ENCODE measurements at regions of chr18 and their contacts with region 1.

Region 1: DNA sequence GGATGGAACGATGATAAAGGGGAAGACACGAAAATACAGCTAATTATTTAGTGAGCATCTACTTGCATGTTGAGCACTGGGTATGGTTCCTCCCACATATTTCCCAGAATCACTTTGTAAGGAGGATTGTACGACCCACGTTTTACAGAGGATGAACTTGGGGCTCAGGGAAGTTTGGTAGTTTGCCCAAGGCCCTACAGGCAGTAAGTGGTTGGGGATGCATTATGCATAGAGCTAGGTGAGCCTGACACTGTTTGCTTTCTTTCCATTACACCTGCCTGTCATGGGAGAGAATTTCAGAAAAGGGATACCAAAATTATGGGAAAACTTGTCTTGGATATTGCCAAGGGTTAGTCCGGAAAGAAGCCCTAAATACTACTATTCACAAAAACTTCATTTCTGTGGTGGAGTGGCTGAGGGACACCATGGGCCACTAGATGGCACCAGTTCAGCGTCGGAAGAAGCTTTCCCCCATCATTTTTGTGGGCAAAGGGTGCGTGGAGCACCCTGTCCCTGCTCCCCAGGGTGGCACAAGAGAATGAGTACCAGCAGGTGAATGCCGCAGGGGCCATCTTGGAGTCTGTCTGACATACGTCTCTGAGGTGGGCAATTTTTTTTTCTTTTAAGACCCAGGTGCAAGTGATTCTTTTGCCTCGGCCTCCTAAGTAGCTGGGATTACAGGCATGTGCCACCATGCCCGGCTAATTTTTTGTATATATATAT is 23.5 kb upstream of the C18orf32 start:
- DNase-seq: peak in 2 of 4 donors; percentile 37 to 62
- ATAC-seq: peak; percentile 88
- H3K4me3 ChIP-seq: no peak overlapping the region
- H3K27ac ChIP-seq: no peak overlapping the region
- H3K4me1 ChIP-seq: no peaks in the 10 kb centered on the region
- H3K27me3 ChIP-seq: no peaks in the 10 kb centered on the region
- CTCF ChIP-seq: peak; percentile 67 to 91

Region 2: DNA sequence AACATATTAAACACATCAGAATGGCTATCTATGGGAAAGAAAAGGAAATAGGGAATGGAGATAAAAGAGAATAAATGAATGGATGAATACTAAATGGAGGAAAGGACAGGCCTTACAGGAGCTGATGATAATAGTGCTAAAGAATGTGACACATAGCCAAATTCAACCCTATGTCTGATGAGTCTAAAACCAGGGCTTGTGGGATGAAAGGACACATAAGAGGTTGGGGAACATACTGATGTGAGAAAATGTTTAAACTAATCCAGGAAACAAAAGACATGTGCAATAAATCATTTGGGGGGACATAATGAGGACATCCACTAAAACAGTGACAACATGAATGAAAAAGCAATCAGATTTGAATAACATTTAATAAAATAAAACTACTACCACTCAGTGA is 170.1 kb before region 1 on chr18:
- intact Hi-C with region 1: no loop called
- DNase-seq: no peak
- ATAC-seq: no peak
- H3K4me3 ChIP-seq: no peak overlapping the region
- H3K27ac ChIP-seq: no peak overlapping the region
- H3K4me1 ChIP-seq: no peaks in the 10 kb centered on the region
- H3K27me3 ChIP-seq: no peaks in the 10 kb centered on the region
- CTCF ChIP-seq: no peak

Region 3: DNA sequence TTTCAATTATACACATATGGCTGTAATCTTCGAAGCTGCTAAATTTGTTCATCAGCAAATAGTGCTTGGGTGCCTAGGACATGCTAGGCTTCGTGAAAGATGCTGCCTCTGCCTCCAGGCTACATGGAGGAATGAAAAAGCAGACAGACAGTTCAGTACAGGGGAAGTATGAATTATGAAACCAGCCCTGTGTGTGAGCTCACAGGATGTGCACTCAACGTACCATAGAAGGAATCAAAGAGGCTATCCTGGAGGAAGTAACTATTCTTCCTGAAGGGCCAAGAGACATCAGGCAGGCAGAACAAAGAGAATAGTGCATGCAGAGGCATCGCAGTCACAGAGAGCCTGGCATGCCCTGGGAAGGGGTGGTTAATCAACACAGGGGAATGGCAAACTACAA is 111.6 kb before region 1 on chr18:
- intact Hi-C with region 1: no loop called
- DNase-seq: no peak
- ATAC-seq: peak; percentile 65
- H3K4me3 ChIP-seq: no peak overlapping the region
- H3K27ac ChIP-seq: peak overlapping the region in 1 of 2 donors; percentile 76
- H3K4me1 ChIP-seq: peaks cover 5 to 41% of the 10 kb centered on the region in 2 donors
- H3K27me3 ChIP-seq: no peaks in the 10 kb centered on the region
- CTCF ChIP-seq: no peak

Region 4: DNA sequence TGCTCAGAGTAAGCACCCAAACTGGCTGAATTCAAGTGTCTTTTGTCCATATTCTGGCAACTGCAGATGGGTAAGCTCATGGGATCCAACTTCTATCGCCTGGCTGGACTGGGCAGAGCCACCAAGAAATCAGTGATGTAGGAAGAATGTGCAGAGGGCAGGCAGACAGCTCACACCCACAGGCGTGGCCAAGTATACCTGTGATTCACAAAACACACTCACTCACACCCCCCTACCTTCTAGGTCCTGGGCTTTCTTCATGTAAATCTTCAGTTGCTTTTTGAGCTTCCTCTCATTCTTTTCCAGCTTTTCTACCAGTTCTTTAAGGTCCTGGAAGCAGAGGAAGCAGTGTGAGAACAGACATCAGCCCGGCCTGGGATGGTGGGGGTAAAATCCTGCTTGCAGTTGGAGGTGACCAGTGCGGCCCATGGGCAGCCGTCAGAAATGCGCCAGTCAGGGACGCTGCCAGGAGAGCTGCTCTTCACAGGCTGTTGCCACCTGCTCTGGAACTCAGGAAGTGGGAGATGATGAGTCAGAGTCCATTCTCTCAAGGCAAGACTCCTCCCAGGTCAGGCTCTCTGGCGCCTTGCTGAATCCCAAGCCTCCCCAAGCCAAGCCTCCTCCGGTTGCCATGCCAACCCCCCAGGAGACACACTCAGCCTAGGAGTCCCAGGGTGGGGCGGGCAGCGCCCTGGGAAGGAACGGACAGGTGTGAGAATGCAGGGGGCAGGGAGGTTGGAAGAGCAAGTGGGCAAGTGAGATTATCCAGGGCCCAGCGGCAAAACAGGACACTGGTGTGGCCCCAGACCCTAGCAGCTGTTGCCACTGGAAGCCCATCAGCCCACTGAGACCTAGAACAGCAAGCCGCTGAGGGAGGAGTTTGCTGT is 339.0 kb after region 1 on chr18:
- intact Hi-C with region 1: loop called in 1 of 2 experiments (anchors 5 kb)
- DNase-seq: peak in 3 of 4 donors; percentile 10 to 90 (median 84)
- ATAC-seq: peak; percentile 89
- H3K4me3 ChIP-seq: peak overlapping the region in 1 of 2 donors; percentile 18
- H3K27ac ChIP-seq: peak overlapping the region in 1 of 2 donors; percentile 64
- H3K4me1 ChIP-seq: no peaks in the 10 kb centered on the region
- H3K27me3 ChIP-seq: no peaks in the 10 kb centered on the region
- CTCF ChIP-seq: no peak

Measured in left lung (tissue), 14 donors.